ENCODE measurements at regions of chr13 and their contacts with region 1.

Region 1: GRCh38 chr13:44912278-44913016 is 76.8 kb downstream of the NUFIP1 start:
- DNase-seq: no peak
- ATAC-seq: no peak
- H3K4me3 ChIP-seq: no peak overlapping the region
- H3K27ac ChIP-seq: no peak overlapping the region
- H3K4me1 ChIP-seq: peaks cover 0 to 6% (median 0%) of the 10 kb centered on the region in 12 donors
- H3K27me3 ChIP-seq: no peaks in the 10 kb centered on the region
- CTCF ChIP-seq: no peak
- POLR2A ChIP-seq: no peak

Region 2: GRCh38 chr13:44810061-44810840 is 102.2 kb before region 1 on chr13:
- intact Hi-C with region 1: loop called in 1 of 10 experiments (anchors 5 kb)
- DNase-seq: peak in 2 of 5 donors; percentile 13 to 39
- ATAC-seq: no peak
- H3K4me3 ChIP-seq: no peak overlapping the region
- H3K27ac ChIP-seq: peak overlapping the region in 1 of 12 donors; percentile 15
- H3K4me1 ChIP-seq: peaks cover 0 to 38% (median 0%) of the 10 kb centered on the region in 12 donors
- H3K27me3 ChIP-seq: no peaks in the 10 kb centered on the region
- CTCF ChIP-seq: no peak
- POLR2A ChIP-seq: no peak